ENCODE measurements at regions of chr3 and their contacts with region 1.

Region 1: DNA sequence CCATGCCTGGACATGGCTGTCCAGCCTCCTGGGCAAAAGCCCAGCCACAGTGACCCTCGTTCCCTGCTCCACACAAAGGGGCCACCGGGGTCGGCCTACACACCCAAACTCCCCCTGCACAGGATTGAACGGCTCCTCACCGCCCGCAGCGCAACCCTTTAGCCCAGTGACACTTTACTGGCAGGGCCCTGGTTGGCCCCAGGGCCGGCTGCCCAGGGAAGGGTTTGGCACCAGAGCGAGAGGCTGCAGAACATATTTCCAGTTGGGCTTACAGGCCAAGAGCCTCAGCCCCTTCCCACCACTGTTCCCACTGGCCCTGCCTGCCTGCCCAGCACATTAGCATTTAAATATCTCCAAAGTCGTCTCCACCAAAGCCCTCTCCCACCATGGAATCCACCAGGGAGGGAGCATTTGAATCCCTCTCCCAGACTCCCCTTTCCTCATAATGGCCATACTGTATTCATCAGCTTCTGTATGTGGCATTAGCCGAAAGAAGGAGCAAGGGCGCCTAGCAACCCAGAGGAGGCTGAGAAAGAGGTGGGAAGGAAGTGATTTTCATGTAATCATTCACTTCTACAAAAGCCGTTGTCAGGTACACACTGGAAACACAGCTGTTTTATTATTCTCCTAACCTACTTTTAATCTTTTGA is 85.4 kb downstream of the SLC6A11 start:
- DNase-seq: no peak
- H3K4me3 ChIP-seq: no peak overlapping the region
- CTCF ChIP-seq: no peak

Region 2: GRCh38 chr3:10841100-10841499 is 60.3 kb before region 1 on chr3:
- in situ Hi-C with region 1: loop called (anchors 5 kb)
- DNase-seq: no peak
- H3K4me3 ChIP-seq: no peak overlapping the region
- CTCF ChIP-seq: no peak